ENCODE measurements at regions of chr12 and their contacts with region 1.

Region 1: GRCh38 chr12:42977451-42978230 is 388.1 kb upstream of the PRICKLE1 start:
- DNase-seq: no peak

Region 2: DNA sequence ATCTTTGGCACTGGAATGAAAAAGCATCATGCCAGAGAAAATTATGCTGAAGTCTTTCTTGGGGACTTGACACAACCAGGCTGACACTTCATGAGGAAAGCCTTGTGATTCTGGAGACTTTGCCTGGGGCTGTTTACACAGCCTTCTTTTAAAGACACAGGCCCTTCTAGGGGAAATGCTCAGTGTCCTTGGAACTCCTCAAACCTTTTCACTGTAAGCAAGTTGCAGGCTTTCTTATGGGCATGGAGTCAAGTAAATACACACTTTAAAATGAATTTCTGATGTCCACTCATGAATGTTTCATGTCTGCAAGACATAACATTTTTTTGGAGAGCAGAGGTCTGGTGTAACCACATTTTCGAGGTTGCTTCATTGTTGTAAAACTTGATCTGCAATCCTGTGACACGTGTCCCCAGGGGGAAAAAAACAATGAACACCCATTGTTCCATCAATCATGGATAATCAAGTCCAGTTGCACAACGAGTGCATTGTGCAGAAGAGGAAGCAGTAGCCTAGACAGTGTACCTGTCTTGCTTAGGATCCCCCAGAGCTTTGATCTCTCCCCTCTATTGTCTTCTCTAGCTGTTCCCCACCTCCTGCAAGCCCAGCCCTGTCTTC is 233.0 kb before region 1 on chr12:
- intact Hi-C with region 1: loop called (anchors 5 kb)
- DNase-seq: no peak

Region 3: DNA sequence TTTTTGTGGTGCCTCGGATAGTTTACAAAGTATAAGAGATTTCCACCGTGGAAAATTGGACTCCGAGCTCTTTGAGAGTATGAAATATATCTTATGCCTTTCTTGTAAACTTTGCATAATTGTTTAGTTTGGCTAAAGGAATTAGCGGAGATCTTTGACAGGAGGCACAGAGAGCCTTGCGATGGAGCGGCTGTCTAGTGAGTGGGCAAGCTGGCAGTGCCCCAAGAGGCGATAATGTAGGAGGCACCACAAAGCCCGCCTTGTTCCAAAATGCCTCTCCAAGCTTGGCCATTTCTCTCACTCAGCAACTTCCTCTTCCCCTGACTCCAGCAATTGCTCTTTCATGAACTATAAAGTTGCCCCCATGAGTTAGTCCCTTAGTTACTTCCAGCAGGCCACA is 118.0 kb before region 1 on chr12:
- intact Hi-C with region 1: no loop called
- DNase-seq: no peak

Measured in cardiac septum (tissue), 1 donor.